A549 (cell line): ENCODE measurements at regions of chr9 and their contacts with region 1.

Region 1: GRCh38 chr9:133715866-133716563 is 22.1 kb downstream of the SARDH start:
- DNase-seq: no peak
- ATAC-seq: peak; percentile 33 to 59; a peak in 4 of 6 replicates
- H3K4me3 ChIP-seq: no peak overlapping the region
- H3K27ac ChIP-seq: no peak overlapping the region
- H3K4me1 ChIP-seq: no peaks in the 10 kb centered on the region
- CTCF ChIP-seq: peak; percentile 29; the same call in 2 of the 3 replicates
- EP300 ChIP-seq: no peak
- POLR2A ChIP-seq: no peak
- RAD21 ChIP-seq: peak; percentile 35 to 56; a peak in 3 of 5 replicates

Region 2: GRCh38 chr9:133726401-133727276 is 10.6 kb after region 1 on chr9:
- CTCF ChIA-PET with region 1: interaction called, 10 read pairs
- POLR2A ChIA-PET with region 1: no interaction called
- DNase-seq: peak; percentile 69 to 78
- ATAC-seq: peak; percentile 80 to 86
- H3K4me3 ChIP-seq: no peak overlapping the region
- H3K27ac ChIP-seq: no peak overlapping the region
- H3K4me1 ChIP-seq: no peaks in the 10 kb centered on the region
- CTCF ChIP-seq: peak; percentile 48; the same call in 2 of the 3 replicates
- EP300 ChIP-seq: no peak
- POLR2A ChIP-seq: no peak
- RAD21 ChIP-seq: peak; percentile 69 to 81